Right lobe of liver (tissue), 6 donors: ENCODE measurements at regions of chr1 and their contacts with region 1.

Region 1: DNA sequence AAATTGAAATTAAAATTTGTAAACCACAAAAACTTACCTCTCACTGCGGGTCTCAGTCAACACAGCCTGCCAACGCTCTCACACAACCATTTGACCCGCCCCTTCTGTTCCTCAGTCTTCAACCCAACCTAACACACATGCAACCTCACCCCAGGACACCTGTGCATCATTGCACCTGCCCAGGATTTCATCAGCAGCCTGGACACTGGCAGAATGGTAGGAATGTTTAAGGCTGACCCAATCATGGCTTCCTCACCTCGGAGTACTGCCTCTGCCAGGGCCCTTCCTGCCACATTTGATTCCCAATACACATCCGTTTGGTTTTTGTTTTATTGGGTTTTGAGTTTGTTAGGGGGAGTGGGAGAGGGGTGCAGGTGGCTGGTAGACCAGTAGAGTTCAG is 40.7 kb downstream of the TOMM20 start:
- DNase-seq: no peak
- ATAC-seq: no peak
- H3K4me3 ChIP-seq: no peak overlapping the region
- H3K27ac ChIP-seq: no peak overlapping the region
- H3K4me1 ChIP-seq: peaks cover 0 to 15% (median 10%) of the 10 kb centered on the region in 4 donors
- H3K27me3 ChIP-seq: no peaks in the 10 kb centered on the region
- CTCF ChIP-seq: no peak
- POLR2A ChIP-seq: no peak

Region 2: DNA sequence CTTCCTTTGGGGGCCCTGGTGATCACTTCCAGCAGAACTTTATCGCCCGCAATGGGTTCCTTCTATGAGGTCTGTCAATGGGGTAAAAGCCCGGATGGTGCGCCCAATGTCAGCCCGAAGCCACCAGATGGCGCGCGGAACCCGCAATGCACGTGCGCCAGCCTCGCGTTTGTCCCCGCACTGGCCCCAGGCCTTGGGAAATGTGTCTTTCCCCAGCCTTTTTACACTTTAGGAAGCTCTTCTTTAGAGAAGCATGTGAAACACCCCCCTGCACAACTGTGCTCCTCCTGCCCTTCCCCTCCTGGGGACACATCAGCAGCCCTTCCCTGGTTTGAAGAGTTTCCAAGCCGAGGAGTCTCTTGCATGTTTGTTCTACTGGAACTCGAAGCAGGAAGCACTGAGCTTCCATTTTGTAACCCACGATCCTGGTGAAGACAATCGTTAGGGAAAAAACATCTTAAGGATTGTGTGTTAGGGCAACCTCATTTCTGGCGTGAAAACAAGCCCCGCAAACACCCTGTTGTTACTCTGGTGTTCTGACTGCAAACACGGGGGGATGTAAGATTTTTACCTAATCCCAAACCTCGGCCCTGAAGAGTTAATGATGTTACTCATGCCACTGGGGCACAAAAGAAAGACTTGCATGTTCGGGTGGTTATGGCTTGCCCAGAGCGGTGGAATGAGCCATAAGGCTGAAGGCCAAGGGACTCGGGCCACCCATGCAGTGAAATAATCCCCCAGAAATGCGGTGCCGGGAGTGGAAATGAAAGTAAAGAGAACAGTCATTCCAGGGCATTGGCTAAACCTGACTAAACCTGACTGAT is 588.6 kb before region 1 on chr1:
- intact Hi-C with region 1: loop called in 1 of 2 experiments (anchors 5 kb)
- DNase-seq: peak; percentile 92 to 93 (median 92)
- ATAC-seq: peak; percentile 87 to 93 (median 90)
- H3K4me3 ChIP-seq: no peak overlapping the region
- H3K27ac ChIP-seq: peak overlapping the region; percentile 78 to 95 (median 91)
- H3K4me1 ChIP-seq: peaks cover 0 to 43% (median 9%) of the 10 kb centered on the region in 4 donors
- H3K27me3 ChIP-seq: no peaks in the 10 kb centered on the region
- CTCF ChIP-seq: peak; percentile 94 to 98 (median 96)
- POLR2A ChIP-seq: no peak